Endothelial cell of umbilical vein (primary cell): ENCODE measurements at regions of chr9 and their contacts with region 1.

Region 1: GRCh38 chr9:94014065-94014654 is 59.0 kb upstream of the BARX1 start:
- DNase-seq: peak; percentile 35
- H3K4me3 ChIP-seq: no peak overlapping the region
- H3K27ac ChIP-seq: no peak overlapping the region
- H3K4me1 ChIP-seq: peaks cover 3% of the 10 kb centered on the region
- H3K27me3 ChIP-seq: peaks cover 0 to 5% of the 10 kb centered on the region in 2 experiments
- CTCF ChIP-seq: peak; percentile 41 to 50
- POLR2A ChIP-seq: no peak

Region 2: DNA sequence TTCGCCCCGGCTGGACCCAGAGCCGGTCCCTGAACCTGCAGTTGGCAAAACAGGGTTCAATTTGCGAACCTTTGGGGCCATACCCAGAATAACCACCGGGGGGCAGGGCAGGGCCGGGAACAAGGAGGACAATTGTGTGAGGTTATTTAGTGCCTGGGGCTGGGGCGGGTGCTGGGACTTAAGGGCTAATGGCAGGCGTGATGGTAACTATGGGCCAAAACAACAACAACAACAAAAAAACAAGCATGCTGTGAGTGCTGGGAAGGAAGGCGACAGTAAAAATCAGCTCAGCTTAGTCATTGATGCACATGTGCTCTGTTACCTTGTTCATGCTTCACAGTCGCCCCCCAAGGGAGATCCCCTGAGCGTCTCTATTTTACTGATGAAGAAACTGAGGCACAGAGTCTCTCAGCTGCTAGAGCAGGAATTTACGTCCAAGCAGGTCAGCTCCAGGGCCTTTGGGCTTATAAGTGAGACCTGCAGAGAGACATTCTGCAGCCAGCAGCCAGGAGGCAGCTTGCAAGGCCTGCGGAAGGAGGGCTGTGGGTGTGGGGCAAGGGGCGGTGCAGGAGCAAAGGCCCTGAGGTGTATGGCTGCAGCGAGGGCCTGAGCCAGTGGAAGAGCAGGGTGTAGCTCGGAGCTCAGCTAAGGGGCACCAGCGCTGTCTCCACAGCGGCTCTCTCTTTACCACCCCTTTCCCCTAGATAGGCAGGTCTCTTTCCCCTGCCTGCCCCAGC is 331.8 kb before region 1 on chr9:
- CTCF ChIA-PET with region 1: interaction called, 12 read pairs
- POLR2A ChIA-PET with region 1: no interaction called
- dilution Hi-C with region 1: no loop called
- intact Hi-C with region 1: no loop called
- DNase-seq: peak; percentile 55
- H3K4me3 ChIP-seq: no peak overlapping the region
- H3K27ac ChIP-seq: no peak overlapping the region
- H3K4me1 ChIP-seq: peaks cover 14% of the 10 kb centered on the region
- H3K27me3 ChIP-seq: no peaks in the 10 kb centered on the region
- CTCF ChIP-seq: peak; percentile 74 to 82
- POLR2A ChIP-seq: no peak

Region 3: GRCh38 chr9:94030318-94031179 is 16.4 kb after region 1 on chr9:
- CTCF ChIA-PET with region 1: interaction called, 27 read pairs
- POLR2A ChIA-PET with region 1: no interaction called
- dilution Hi-C with region 1: no loop called
- intact Hi-C with region 1: loop called (anchors 1 kb)
- DNase-seq: peak; percentile 88
- H3K4me3 ChIP-seq: peak overlapping the region; percentile 70 to 87 (median 86)
- H3K27ac ChIP-seq: peak overlapping the region; percentile 54
- H3K4me1 ChIP-seq: peaks cover 14% of the 10 kb centered on the region
- H3K27me3 ChIP-seq: no peaks in the 10 kb centered on the region
- CTCF ChIP-seq: no peak
- POLR2A ChIP-seq: peak; percentile 58

Region 4: GRCh38 chr9:94065535-94065961 is 51.4 kb after region 1 on chr9:
- CTCF ChIA-PET with region 1: interaction called, 40 read pairs
- POLR2A ChIA-PET with region 1: no interaction called
- dilution Hi-C with region 1: no loop called
- intact Hi-C with region 1: loop called (anchors 1 kb)
- DNase-seq: peak; percentile 89
- H3K4me3 ChIP-seq: no peak overlapping the region
- H3K27ac ChIP-seq: no peak overlapping the region
- H3K4me1 ChIP-seq: peaks cover 4% of the 10 kb centered on the region
- H3K27me3 ChIP-seq: no peaks in the 10 kb centered on the region
- CTCF ChIP-seq: peak; percentile 73 to 80
- POLR2A ChIP-seq: no peak

Region 5: DNA sequence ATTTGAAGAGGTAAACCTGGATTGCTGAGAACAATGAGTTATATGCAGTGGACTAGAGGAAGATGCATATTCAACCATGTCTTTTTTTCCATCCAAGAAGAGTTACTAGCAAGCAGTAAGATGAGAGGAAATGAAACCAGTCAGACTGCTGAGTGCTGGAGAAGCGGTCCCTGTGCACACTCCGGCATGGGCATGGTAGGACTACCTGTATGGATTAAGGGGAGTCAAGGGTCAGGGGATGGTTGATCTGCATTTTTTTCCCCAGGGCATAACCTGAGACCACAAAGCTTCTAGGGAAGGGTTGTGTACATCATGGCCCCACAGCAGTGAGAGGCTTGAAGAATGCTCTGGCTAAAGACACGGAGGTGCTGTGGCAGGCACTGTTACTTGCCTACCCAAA is 168.4 kb after region 1 on chr9:
- CTCF ChIA-PET with region 1: interaction called, 10 read pairs
- POLR2A ChIA-PET with region 1: no interaction called
- dilution Hi-C with region 1: no loop called
- intact Hi-C with region 1: no loop called
- DNase-seq: no peak
- H3K4me3 ChIP-seq: no peak overlapping the region
- H3K27ac ChIP-seq: no peak overlapping the region
- H3K4me1 ChIP-seq: no peaks in the 10 kb centered on the region
- H3K27me3 ChIP-seq: no peaks in the 10 kb centered on the region
- CTCF ChIP-seq: no peak
- POLR2A ChIP-seq: no peak

Region 6: GRCh38 chr9:94222872-94223271 is 208.7 kb after region 1 on chr9:
- CTCF ChIA-PET with region 1: interaction called, 493 read pairs
- POLR2A ChIA-PET with region 1: no interaction called
- dilution Hi-C with region 1: no loop called
- intact Hi-C with region 1: no loop called
- DNase-seq: no peak
- H3K4me3 ChIP-seq: no peak overlapping the region
- H3K27ac ChIP-seq: no peak overlapping the region
- H3K4me1 ChIP-seq: no peaks in the 10 kb centered on the region
- H3K27me3 ChIP-seq: peaks cover 2 to 3% of the 10 kb centered on the region in 2 experiments
- CTCF ChIP-seq: no peak
- POLR2A ChIP-seq: no peak

Region 7: GRCh38 chr9:94623253-94623652 is 609.1 kb after region 1 on chr9:
- CTCF ChIA-PET with region 1: no interaction called
- POLR2A ChIA-PET with region 1: no interaction called
- dilution Hi-C with region 1: no loop called
- intact Hi-C with region 1: no loop called
- DNase-seq: no peak
- H3K4me3 ChIP-seq: no peak overlapping the region
- H3K27ac ChIP-seq: no peak overlapping the region
- H3K4me1 ChIP-seq: peaks cover 2% of the 10 kb centered on the region
- H3K27me3 ChIP-seq: no peaks in the 10 kb centered on the region
- CTCF ChIP-seq: peak in 1 of 2 donors; percentile 36
- POLR2A ChIP-seq: no peak